ENCODE measurements at regions of chr9 and their contacts with region 1.

Region 1: GRCh38 chr9:127734747-127735529 is at the start of gene TOR2A:
- DNase-seq: peak; percentile 99
- H3K4me3 ChIP-seq: peak within 1 kb of the TSS; percentile 94
- H3K4me3 Mint-ChIP-seq: peak within 1 kb of the TSS; percentile 80 to 98 (median 94)
- H3K27ac ChIP-seq: peak within 1 kb of the TSS; percentile 62
- H3K27ac Mint-ChIP-seq: peak within 1 kb of the TSS; percentile 85 to 98 (median 96)
- H3K4me1 ChIP-seq: peaks cover 22% of the 10 kb centered on the region
- H3K4me1 Mint-ChIP-seq: peaks cover 14 to 25% (median 23%) of the 10 kb centered on the region in 3 donors
- H3K27me3 ChIP-seq: no peaks in the 10 kb centered on the region
- H3K27me3 Mint-ChIP-seq: no peaks in the 10 kb centered on the region
- total RNA-seq, gene TOR2A: 30.7 to 33.7 TPM

Region 2: GRCh38 chr9:127578955-127579853 is 155.7 kb before region 1 on chr9:
- CTCF ChIA-PET with region 1: interaction called, 11 read pairs
- POLR2A ChIA-PET with region 1: no interaction called
- DNase-seq: peak; percentile 27 to 81 (median 49)
- H3K4me3 ChIP-seq: no peak overlapping the region
- H3K4me3 Mint-ChIP-seq: peak overlapping the region in 6 of 7 donors; percentile 18 to 72 (median 32)
- H3K27ac ChIP-seq: peak overlapping the region; percentile 43
- H3K27ac Mint-ChIP-seq: peak overlapping the region; percentile 11 to 95 (median 81)
- H3K4me1 ChIP-seq: peaks cover 12% of the 10 kb centered on the region
- H3K4me1 Mint-ChIP-seq: peaks cover 10 to 15% (median 12%) of the 10 kb centered on the region in 3 donors
- H3K27me3 ChIP-seq: no peaks in the 10 kb centered on the region
- H3K27me3 Mint-ChIP-seq: peaks cover 7 to 11% of the 10 kb centered on the region in 2 donors

Region 3: GRCh38 chr9:127707726-127708147 is 27.2 kb before region 1 on chr9:
- CTCF ChIA-PET with region 1: interaction called, 28 read pairs
- POLR2A ChIA-PET with region 1: interaction called, 4 read pairs
- DNase-seq: peak in 4 of 5 donors; percentile 33 to 73 (median 50)
- H3K4me3 ChIP-seq: no peak overlapping the region
- H3K4me3 Mint-ChIP-seq: peak overlapping the region in 1 of 7 donors; percentile 40
- H3K27ac ChIP-seq: no peak overlapping the region
- H3K27ac Mint-ChIP-seq: peak overlapping the region in 6 of 8 donors; percentile 19 to 62 (median 42)
- H3K4me1 ChIP-seq: peaks cover 13% of the 10 kb centered on the region
- H3K4me1 Mint-ChIP-seq: peaks cover 23 to 29% (median 28%) of the 10 kb centered on the region in 3 donors
- H3K27me3 ChIP-seq: no peaks in the 10 kb centered on the region
- H3K27me3 Mint-ChIP-seq: peaks cover 0 to 3% of the 10 kb centered on the region in 2 donors

Region 4: GRCh38 chr9:127770905-127771569 is 36.1 kb after region 1 on chr9:
- CTCF ChIA-PET with region 1: interaction called, 24 read pairs
- POLR2A ChIA-PET with region 1: interaction called, 9 read pairs
- DNase-seq: peak; percentile 85 to 96 (median 90)
- H3K4me3 ChIP-seq: peak overlapping the region; percentile 71
- H3K4me3 Mint-ChIP-seq: peak overlapping the region; percentile 80 to 96 (median 89)
- H3K27ac ChIP-seq: peak overlapping the region; percentile 77
- H3K27ac Mint-ChIP-seq: peak overlapping the region; percentile 86 to 99 (median 98)
- H3K4me1 ChIP-seq: peaks cover 73% of the 10 kb centered on the region
- H3K4me1 Mint-ChIP-seq: peaks cover 61 to 79% (median 75%) of the 10 kb centered on the region in 3 donors
- H3K27me3 ChIP-seq: no peaks in the 10 kb centered on the region
- H3K27me3 Mint-ChIP-seq: no peaks in the 10 kb centered on the region

Region 5: GRCh38 chr9:127854184-127854806 is 119.4 kb after region 1 on chr9 and contains the start of gene ENG:
- CTCF ChIA-PET with region 1: interaction called, 10 read pairs
- POLR2A ChIA-PET with region 1: no interaction called
- DNase-seq: peak in 1 of 5 donors; percentile 14
- H3K4me3 ChIP-seq: peak within 1 kb of the TSS; percentile 72
- H3K4me3 Mint-ChIP-seq: peak within 1 kb of the TSS; percentile 83 to 95 (median 85)
- H3K27ac ChIP-seq: no peak within 1 kb of the TSS
- H3K27ac Mint-ChIP-seq: peak within 1 kb of the TSS; percentile 72 to 96 (median 88)
- H3K4me1 ChIP-seq: peaks cover 25% of the 10 kb centered on the region
- H3K4me1 Mint-ChIP-seq: peaks cover 20 to 43% (median 31%) of the 10 kb centered on the region in 3 donors
- H3K27me3 ChIP-seq: no peaks in the 10 kb centered on the region
- H3K27me3 Mint-ChIP-seq: no peaks in the 10 kb centered on the region
- total RNA-seq, gene ENG: 18.9 to 19.3 TPM

Region 6: DNA sequence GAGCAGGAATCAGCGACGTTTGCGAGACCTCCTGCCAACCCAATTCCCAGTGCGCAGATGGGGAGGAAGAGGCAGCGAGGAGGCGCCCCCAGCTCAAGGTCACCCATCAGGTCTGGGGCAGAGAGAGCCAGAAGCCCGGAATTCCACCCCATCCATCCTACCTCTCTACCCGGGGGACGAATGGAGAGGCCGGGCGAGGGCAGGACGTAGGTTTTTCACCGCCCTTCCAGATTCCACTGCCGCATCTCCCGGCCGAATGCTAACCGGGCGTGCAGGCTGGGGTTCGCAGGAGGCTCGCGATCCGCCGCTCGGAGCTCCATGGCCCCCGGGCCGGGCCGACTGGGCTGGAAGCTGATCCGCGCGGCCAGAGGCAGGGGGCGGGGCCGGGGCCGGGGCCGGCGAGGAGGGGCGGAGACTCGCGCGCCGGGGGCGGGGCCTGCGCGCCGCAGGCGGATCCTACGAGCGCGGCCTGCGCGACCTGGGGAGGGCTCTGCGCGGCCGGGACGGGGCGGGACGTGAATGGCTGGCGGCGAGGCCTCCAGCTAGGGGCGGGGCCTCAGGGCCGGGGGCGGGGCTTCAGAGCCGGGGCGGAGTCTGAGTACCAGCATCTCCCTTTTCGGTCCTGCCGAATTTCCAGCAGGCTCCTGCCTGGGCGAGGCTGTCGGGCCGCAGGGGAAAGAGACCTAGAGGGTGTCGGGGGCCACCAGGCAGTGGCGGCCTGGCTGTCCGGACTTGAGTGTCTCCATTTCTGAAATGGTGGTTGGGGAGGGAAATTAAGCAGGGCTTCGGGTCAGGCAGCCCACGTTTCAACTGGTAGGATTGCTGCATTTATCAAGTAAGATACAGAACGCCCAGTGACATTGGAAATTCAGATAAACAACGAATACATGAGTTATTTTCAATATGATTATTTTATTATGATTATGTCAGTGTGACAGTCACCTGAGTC is 182.0 kb after region 1 on chr9 and contains the start of gene ST6GALNAC4:
- CTCF ChIA-PET with region 1: interaction called, 68 read pairs
- POLR2A ChIA-PET with region 1: interaction called, 4 read pairs
- DNase-seq: peak; percentile 89 to 96 (median 94)
- H3K4me3 ChIP-seq: peak within 1 kb of the TSS; percentile 94
- H3K4me3 Mint-ChIP-seq: peak within 1 kb of the TSS; percentile 82 to 94 (median 89)
- H3K27ac ChIP-seq: peak within 1 kb of the TSS; percentile 81
- H3K27ac Mint-ChIP-seq: peak within 1 kb of the TSS; percentile 53 to 95 (median 93)
- H3K4me1 ChIP-seq: peaks cover 52% of the 10 kb centered on the region
- H3K4me1 Mint-ChIP-seq: peaks cover 40 to 66% (median 45%) of the 10 kb centered on the region in 3 donors
- H3K27me3 ChIP-seq: no peaks in the 10 kb centered on the region
- H3K27me3 Mint-ChIP-seq: peaks cover 0 to 7% of the 10 kb centered on the region in 2 donors
- total RNA-seq, gene ST6GALNAC4: 32.9 to 43.2 TPM